GM23248 (cell line): ENCODE measurements at regions of chr12 and their contacts with region 1.

Region 1: DNA sequence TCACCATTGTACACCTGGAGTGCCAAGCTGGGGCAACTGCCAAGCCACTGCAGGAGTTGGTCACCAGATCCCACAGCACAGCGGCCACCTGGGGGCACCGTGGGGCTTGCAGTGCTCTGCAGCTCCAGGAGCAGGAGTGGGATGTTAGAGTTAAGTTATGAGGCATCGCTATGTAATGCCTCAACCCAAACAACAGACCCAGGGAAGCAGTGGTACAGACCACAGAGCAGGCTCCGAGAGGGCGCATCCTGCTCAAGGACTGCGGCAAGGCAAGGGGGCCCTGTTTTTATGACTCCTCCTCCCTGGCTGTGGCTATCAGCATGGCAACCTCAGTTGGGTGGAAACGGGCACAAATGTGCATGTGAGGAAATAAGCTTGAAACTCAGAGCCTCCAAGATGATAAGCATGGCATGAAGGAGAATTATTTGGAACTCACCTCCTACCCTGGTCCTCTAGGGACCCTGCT is 63.1 kb downstream of the ARL6IP4 start:
- DNase-seq: peak; percentile 96
- H3K4me3 ChIP-seq: no peak overlapping the region
- H3K27ac ChIP-seq: peak overlapping the region; percentile 70
- H3K4me1 ChIP-seq: peaks cover 6% of the 10 kb centered on the region; the same call in 1 of the 2 replicates
- H3K27me3 ChIP-seq: no peaks in the 10 kb centered on the region

Region 2: GRCh38 chr12:122517877-122518276 is 525.7 kb before region 1 on chr12:
- in situ Hi-C with region 1: no loop called
- DNase-seq: peak; percentile 94
- H3K4me3 ChIP-seq: no peak overlapping the region
- H3K27ac ChIP-seq: peak overlapping the region; percentile 80
- H3K4me1 ChIP-seq: peaks cover 37% of the 10 kb centered on the region
- H3K27me3 ChIP-seq: no peaks in the 10 kb centered on the region

Region 3: GRCh38 chr12:123141615-123142517 is 98.3 kb after region 1 on chr12:
- in situ Hi-C with region 1: loop called (anchors 10 kb)
- DNase-seq: peak; percentile 91
- H3K4me3 ChIP-seq: 0 out of 2 replicates have a peak overlapping the region, but pooled peaks have one; percentile 32
- H3K27ac ChIP-seq: peak overlapping the region; percentile 53
- H3K4me1 ChIP-seq: peaks cover 36% of the 10 kb centered on the region
- H3K27me3 ChIP-seq: no peaks in the 10 kb centered on the region

Region 4: DNA sequence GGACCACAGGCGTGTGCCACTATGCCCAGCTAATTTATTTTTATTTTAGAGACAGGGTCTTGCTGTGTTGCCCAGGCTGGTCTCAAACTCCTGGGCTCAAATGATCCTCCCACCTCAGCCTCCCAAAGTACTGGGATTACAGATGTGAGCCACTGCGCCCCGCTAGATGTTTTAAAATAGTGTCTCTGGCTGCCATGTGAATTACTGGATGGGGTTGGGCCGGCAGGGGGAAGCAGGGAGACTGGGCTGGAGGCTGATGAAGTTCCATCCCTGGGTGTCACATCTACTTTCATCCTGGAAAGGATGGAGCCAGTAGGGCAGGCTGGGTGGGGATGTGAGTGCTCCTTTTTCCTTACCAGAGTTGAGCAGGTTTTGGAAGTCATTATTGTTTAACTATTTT is 764.6 kb after region 1 on chr12:
- in situ Hi-C with region 1: no loop called
- DNase-seq: peak; percentile 61
- H3K4me3 ChIP-seq: no peak overlapping the region
- H3K27ac ChIP-seq: no peak overlapping the region
- H3K4me1 ChIP-seq: no peaks in the 10 kb centered on the region
- H3K27me3 ChIP-seq: 0 out of 2 replicates have a peak, but pooled peaks cover 7% of the 10 kb centered on the region